ENCODE measurements at regions of chr14 and their contacts with region 1.

Region 1: GRCh38 chr14:104768437-104769323 is 15.7 kb downstream of the SIVA1 start:
- DNase-seq: peak; percentile 92
- CTCF ChIP-seq: peak; percentile 98

Region 2: GRCh38 chr14:104826189-104826860 is 57.6 kb after region 1 on chr14:
- in situ Hi-C with region 1: loop called (anchors 10 kb)
- DNase-seq: peak; percentile 97
- CTCF ChIP-seq: peak; percentile 80

Region 3: DNA sequence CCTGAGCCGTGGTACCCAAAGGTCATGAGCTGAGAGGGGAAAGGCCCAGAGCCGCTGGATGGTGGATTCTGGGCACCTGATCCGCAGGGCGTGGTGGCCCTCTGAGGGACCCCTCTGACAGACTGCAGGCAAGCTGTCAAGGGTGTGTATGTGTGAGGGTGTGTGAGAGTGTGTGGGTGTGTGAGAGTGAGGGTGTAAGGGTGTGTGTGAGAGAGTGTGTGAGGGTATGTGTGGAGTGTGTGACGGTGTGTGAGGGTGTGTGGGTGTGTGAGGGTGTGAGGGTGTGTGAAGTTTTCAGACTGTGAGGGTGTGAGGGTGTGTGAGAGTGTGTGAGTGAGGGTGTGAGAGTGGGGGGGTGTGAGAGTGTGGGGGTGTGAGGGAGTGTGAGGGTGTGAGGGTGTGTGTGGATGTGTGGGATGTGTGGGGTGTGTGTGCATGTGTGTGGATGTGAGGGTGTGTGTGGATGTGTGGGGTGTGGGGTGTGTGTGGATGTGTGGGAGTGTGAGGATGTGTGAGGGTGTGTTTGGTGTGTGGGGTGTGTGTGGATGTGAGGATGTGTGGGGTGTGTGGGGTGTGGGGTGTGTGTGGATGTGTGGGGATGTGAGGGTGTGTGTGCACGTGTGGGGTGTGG is 914.4 kb after region 1 on chr14:
- in situ Hi-C with region 1: no loop called
- DNase-seq: no peak
- CTCF ChIP-seq: no peak